ENCODE measurements at regions of chr1 and their contacts with region 1.

Region 1: GRCh38 chr1:153494976-153495535 is 34.6 kb upstream of the S100A7 start:
- DNase-seq: peak; percentile 79
- ATAC-seq: peak; percentile 60
- H3K4me3 Mint-ChIP-seq: no peak overlapping the region
- H3K27ac Mint-ChIP-seq: no peak overlapping the region
- H3K4me1 Mint-ChIP-seq: no peaks in the 10 kb centered on the region
- H3K27me3 Mint-ChIP-seq: peaks cover 21% of the 10 kb centered on the region

Region 2: GRCh38 chr1:153344531-153344981 is 150.5 kb before region 1 on chr1:
- CTCF ChIA-PET with region 1: interaction called, 10 read pairs
- POLR2A ChIA-PET with region 1: no interaction called
- DNase-seq: peak; percentile 17
- ATAC-seq: no peak
- H3K4me3 Mint-ChIP-seq: no peak overlapping the region
- H3K27ac Mint-ChIP-seq: no peak overlapping the region
- H3K4me1 Mint-ChIP-seq: peaks cover 44% of the 10 kb centered on the region
- H3K27me3 Mint-ChIP-seq: peaks cover 49% of the 10 kb centered on the region

Region 3: DNA sequence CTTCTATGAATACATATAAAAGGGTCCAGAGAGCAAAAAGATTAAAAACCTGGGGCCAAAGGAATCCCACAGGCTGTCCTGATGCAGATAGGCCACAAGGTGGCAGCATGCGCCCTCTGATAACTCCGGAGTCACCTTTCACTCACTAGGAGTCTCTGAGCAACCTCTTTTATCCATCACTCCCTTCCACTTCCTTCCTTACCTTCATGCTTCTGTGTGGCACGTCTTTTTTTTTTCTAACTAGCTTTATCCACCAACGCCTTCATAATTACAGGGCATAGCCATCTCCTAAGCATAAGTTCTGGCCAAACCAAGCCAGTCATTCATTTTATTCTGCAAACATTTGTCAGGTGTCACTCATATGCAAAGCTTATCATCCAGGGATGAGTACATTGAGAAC is 142.5 kb before region 1 on chr1:
- CTCF ChIA-PET with region 1: interaction called, 140 read pairs
- POLR2A ChIA-PET with region 1: no interaction called
- DNase-seq: peak; percentile 78
- ATAC-seq: peak; percentile 68
- H3K4me3 Mint-ChIP-seq: no peak overlapping the region
- H3K27ac Mint-ChIP-seq: no peak overlapping the region
- H3K4me1 Mint-ChIP-seq: peaks cover 5% of the 10 kb centered on the region
- H3K27me3 Mint-ChIP-seq: peaks cover 33% of the 10 kb centered on the region

Region 4: DNA sequence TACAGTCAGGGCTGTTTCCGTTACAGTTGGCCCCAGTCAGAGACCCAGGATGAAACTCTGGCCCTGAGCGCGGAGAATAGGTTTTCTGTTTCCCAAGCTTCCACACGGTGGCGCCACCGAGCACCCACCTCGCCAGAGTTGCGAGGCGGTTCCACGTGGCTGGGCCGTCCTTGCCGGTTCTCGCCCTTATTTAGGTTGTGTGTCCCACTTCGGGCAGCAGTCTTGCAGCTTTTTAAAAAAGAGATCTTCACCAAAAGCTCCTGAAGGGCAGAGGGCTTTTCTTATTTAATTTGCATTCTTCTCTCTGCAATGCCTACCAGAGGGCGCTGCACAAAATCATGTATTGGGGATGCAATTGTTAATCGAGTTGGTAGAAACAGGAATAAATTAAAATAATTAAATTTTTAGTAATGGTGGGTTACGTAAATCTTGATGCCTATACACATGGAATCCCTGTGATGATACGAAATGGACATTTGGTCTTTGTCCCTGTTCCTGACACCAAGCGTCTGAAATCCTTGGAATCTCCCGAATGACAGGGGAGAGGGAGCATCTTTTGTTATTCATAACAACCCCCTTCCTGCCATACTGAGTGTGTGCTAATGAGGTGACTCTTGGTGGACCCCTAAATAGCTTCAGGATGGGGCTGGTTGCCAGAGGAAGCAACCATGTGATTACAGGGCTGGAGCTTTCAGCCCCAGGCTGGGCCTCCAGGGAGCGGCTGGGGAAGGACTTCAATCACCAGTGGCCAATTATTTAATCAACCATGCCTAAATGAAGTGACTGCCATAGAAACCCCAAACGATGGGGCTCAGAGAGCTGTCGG is 29.0 kb before region 1 on chr1:
- CTCF ChIA-PET with region 1: interaction called, 27 read pairs
- POLR2A ChIA-PET with region 1: no interaction called
- DNase-seq: peak; percentile 69
- ATAC-seq: peak; percentile 82
- H3K4me3 Mint-ChIP-seq: no peak overlapping the region
- H3K27ac Mint-ChIP-seq: no peak overlapping the region
- H3K4me1 Mint-ChIP-seq: peaks cover 4% of the 10 kb centered on the region
- H3K27me3 Mint-ChIP-seq: peaks cover 9% of the 10 kb centered on the region

Region 5: GRCh38 chr1:153478692-153479618 is 16.1 kb before region 1 on chr1:
- CTCF ChIA-PET with region 1: interaction called, 14 read pairs
- POLR2A ChIA-PET with region 1: no interaction called
- DNase-seq: no peak
- ATAC-seq: no peak
- H3K4me3 Mint-ChIP-seq: no peak overlapping the region
- H3K27ac Mint-ChIP-seq: no peak overlapping the region
- H3K4me1 Mint-ChIP-seq: no peaks in the 10 kb centered on the region
- H3K27me3 Mint-ChIP-seq: peaks cover 35% of the 10 kb centered on the region

Region 6: DNA sequence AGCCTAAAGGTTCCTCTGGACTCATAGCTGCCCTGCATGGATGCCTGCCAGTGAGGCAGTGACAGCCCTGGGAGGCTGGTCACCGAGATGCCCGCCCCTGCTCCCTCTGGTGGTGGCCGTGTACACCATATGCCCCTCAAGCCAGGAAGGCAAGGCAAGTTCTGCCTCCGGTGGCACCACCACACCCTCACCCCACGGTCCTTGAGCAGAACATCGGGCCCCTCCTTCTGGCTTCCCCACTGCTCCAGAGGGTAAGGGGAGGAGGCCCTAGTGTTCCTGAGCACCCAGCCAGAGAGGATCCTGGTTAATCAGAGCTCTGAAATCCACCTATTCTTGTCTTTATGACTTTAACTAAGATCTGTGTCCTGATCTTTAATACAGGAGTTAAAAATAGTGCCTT is 122.6 kb after region 1 on chr1:
- CTCF ChIA-PET with region 1: no interaction called
- POLR2A ChIA-PET with region 1: no interaction called
- DNase-seq: peak; percentile 86
- ATAC-seq: peak; percentile 98
- H3K4me3 Mint-ChIP-seq: no peak overlapping the region
- H3K27ac Mint-ChIP-seq: peak overlapping the region; percentile 30
- H3K4me1 Mint-ChIP-seq: peaks cover 9% of the 10 kb centered on the region
- H3K27me3 Mint-ChIP-seq: no peaks in the 10 kb centered on the region

Measured in activated CD8-positive, alpha-beta T cell treated with anti-CD3 and anti-CD28 coated beads, Interleukin-2, amount 10 ng/mL, durations not matched to agents 7 days and 5 days (primary cell).